Heart right ventricle (tissue), 16 donors: ENCODE measurements at regions of chr12 and their contacts with region 1.

Region 1: GRCh38 chr12:32455607-32456071 is 56.3 kb downstream of the FGD4 start:
- DNase-seq: peak in 1 of 2 donors; percentile 71
- ATAC-seq: peak in 7 of 8 donors; percentile 53 to 80 (median 67)
- H3K4me3 ChIP-seq: peak overlapping the region in 9 of 10 donors; percentile 4 to 53 (median 46)
- H3K27ac ChIP-seq: peak overlapping the region in 9 of 10 donors; percentile 27 to 76 (median 69)
- H3K4me1 ChIP-seq: peaks cover 7 to 74% (median 58%) of the 10 kb centered on the region in 9 donors
- H3K27me3 ChIP-seq: no peaks in the 10 kb centered on the region
- CTCF ChIP-seq: peak; percentile 39 to 86 (median 73)

Region 2: DNA sequence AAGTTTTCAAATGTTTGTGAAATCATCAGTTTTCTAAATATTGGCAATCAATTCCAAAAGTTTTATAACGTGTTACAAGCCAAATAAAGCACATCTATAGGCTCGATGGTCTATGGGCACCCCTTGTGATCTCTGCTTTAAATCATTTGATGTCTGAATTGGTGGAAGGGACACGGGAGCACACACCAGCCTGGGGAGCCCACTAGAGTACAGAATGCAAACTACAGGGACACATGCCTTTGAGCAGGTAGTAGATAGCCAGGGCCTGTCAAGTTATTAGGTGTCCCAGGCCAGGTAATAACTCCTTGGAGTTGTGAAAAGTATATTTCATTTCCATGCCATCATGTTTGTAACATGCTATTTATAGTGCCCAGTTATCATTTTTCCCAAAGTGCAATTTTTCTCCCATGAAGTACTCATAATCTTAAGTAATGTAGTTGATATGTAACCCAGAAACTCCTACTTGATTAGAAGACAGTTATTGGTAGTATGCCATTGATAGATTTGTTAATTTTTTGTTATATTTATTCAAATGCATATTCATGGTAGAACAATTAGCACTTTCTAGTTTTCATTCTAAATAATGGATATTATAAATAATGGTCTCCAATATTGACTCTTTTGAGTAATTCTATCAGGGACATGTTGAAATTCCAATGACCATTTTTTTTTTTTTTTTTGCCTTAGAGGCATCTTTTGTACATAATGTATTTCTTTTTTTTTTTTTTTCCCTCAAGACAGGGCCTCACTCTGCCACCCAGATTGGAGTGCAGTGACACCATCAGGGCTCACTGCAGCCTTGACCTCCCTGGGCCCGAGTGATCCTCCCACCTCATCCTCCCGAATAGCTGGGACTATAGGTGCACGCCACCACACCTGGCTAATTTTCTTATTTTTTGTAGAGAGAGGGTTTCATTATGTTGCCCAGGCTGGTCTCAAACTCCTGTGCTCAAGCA is 153.1 kb before region 1 on chr12:
- intact Hi-C with region 1: no loop called
- DNase-seq: no peak
- ATAC-seq: peak in 7 of 8 donors; percentile 52 to 73 (median 61)
- H3K4me3 ChIP-seq: no peak overlapping the region
- H3K27ac ChIP-seq: no peak overlapping the region
- H3K4me1 ChIP-seq: peaks cover 0 to 5% (median 0%) of the 10 kb centered on the region in 9 donors
- H3K27me3 ChIP-seq: no peaks in the 10 kb centered on the region
- CTCF ChIP-seq: peak in 7 of 9 donors; percentile 15 to 62 (median 45)

Region 3: GRCh38 chr12:32365473-32366064 is 90.1 kb before region 1 on chr12:
- intact Hi-C with region 1: loop called in 2 of 10 experiments (anchors 5 kb)
- DNase-seq: peak in 1 of 2 donors; percentile 57
- ATAC-seq: peak in 5 of 8 donors; percentile 62 to 76 (median 71)
- H3K4me3 ChIP-seq: no peak overlapping the region
- H3K27ac ChIP-seq: no peak overlapping the region
- H3K4me1 ChIP-seq: peaks cover 0 to 7% (median 2%) of the 10 kb centered on the region in 9 donors
- H3K27me3 ChIP-seq: no peaks in the 10 kb centered on the region
- CTCF ChIP-seq: peak; percentile 64 to 87 (median 84)

Region 4: DNA sequence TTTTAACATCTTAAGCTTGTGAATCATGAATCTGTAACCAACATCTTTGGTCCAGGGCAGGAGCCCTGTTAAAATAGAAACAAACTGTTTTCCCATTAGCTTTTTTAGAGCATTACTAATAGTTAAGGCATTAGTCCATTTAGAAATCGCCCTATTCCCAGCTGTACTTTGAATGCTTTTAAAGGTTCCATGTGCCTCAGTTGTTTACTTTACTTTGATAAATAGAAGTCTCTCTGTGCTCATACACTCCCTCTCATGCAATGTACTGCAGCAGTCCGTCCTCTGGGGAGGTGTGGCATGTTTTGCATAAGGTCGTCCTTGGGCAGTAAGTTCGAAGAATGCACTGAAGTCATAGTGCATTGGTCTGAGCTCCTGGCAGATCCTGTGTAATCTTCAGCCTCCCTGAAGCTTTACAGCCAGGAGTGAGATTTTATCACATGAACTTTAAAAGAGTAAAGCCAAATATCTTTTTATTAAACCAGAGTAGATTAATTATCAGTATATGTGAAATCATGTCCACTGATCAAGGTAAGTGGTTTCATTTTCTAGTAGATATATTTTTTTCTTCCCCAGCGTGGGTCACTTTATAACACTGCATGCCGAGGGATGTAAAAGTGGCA is 78.4 kb after region 1 on chr12:
- intact Hi-C with region 1: loop called in 3 of 10 experiments (anchors 5 kb)
- DNase-seq: peak in 1 of 2 donors; percentile 53
- ATAC-seq: peak; percentile 73 to 92 (median 88)
- H3K4me3 ChIP-seq: peak overlapping the region; percentile 23 to 62 (median 52)
- H3K27ac ChIP-seq: peak overlapping the region; percentile 62 to 89 (median 75)
- H3K4me1 ChIP-seq: peaks cover 0 to 64% (median 57%) of the 10 kb centered on the region in 9 donors
- H3K27me3 ChIP-seq: no peaks in the 10 kb centered on the region
- CTCF ChIP-seq: no peak

Region 5: DNA sequence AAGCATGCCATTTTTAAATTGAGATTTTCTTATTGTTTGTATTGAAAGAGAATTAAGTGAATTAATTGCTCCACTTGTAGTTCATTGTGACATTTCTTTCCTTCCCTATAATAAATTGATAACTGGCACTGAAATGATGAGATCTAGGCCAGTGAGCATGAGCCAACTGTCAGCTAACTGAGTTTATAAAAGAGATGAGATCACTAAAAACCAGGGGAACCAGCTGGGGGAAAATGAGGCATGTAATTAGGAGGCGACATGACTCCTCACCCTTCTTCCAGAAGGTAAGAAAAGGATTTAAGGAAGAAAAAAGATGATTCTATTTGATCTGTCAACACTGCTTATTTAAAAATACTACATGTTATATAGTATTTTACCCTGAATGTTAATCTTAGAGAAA is 118.9 kb after region 1 on chr12:
- intact Hi-C with region 1: loop called in 2 of 10 experiments (anchors 10 kb)
- DNase-seq: no peak
- ATAC-seq: no peak
- H3K4me3 ChIP-seq: no peak overlapping the region
- H3K27ac ChIP-seq: no peak overlapping the region
- H3K4me1 ChIP-seq: peaks cover 0 to 44% (median 25%) of the 10 kb centered on the region in 9 donors
- H3K27me3 ChIP-seq: no peaks in the 10 kb centered on the region
- CTCF ChIP-seq: no peak

Region 6: GRCh38 chr12:32671930-32672780 is 216.5 kb after region 1 on chr12:
- intact Hi-C with region 1: loop called in 7 of 10 experiments (anchors 5 to 10 kb)
- DNase-seq: peak in 1 of 2 donors; percentile 60
- ATAC-seq: peak; percentile 63 to 91 (median 86)
- H3K4me3 ChIP-seq: no peak overlapping the region
- H3K27ac ChIP-seq: no peak overlapping the region
- H3K4me1 ChIP-seq: peaks cover 0 to 12% (median 0%) of the 10 kb centered on the region in 9 donors
- H3K27me3 ChIP-seq: no peaks in the 10 kb centered on the region
- CTCF ChIP-seq: peak; percentile 39 to 78 (median 68)